ENCODE measurements at regions of chr1 and their contacts with region 1.

Region 1: DNA sequence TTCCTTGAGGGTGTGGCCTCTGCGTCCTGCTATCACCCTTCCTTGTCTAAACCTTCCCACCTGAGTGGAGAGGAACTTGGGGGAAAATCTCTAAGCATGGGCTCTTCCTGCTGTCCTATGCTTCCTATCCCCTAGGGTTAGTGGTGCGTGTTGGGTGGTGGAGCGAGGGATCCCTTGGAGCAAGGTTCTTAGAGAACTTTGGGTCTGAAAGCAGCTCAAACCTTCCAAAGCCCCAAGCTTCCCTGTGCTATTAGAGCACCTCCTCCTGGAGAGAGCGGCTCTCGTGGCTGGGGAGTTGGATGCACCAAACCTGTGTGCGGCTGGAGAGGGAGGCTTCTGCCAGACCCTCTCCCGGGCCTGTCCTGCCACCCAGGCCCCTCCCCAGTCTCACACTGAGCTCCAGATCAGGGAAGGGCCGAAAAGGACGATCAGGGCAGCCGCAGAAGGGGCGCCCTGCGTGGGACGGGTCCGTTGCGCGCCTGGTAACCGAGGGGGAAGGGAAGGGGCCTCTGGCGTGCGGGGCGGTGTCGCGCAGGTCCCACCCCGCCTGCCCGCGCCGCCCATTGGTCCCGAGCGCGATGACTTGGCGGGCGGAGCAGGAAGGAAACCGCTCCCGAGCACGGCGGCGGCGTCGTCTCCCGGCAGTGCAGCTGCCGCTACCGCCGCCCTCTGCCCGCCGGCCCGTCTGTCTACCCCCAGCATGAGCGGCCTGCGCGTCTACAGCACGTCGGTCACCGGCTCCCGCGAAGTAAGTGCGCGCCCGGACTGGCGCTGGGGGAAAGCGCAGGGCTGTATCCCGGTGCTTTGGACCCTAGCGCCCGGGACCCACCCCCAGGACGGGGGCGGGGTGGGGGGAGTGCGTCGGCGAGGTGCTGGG is at the start of gene SH3BGRL3:
- H3K4me3 ChIP-seq: peak within 1 kb of the TSS; percentile 63
- H3K27ac ChIP-seq: 0 out of 2 replicates have a peak within 1 kb of the TSS, but pooled peaks have one; percentile 7
- H3K4me1 ChIP-seq: 0 out of 2 replicates have a peak, but pooled peaks cover 3% of the 10 kb centered on the region
- CTCF ChIP-seq: peak; percentile 92

Region 2: GRCh38 chr1:25232027-25232865 is 1047.4 kb before region 1 on chr1 and contains the start of gene SYF2:
- CTCF ChIA-PET with region 1: no interaction called
- POLR2A ChIA-PET with region 1: no interaction called
- H3K4me3 ChIP-seq: peak within 1 kb of the TSS; percentile 94
- H3K27ac ChIP-seq: peak within 1 kb of the TSS; percentile 53
- H3K4me1 ChIP-seq: 0 out of 2 replicates have a peak, but pooled peaks cover 3% of the 10 kb centered on the region
- CTCF ChIP-seq: no peak

Region 3: GRCh38 chr1:25922056-25922969 is 357.4 kb before region 1 on chr1:
- CTCF ChIA-PET with region 1: no interaction called
- POLR2A ChIA-PET with region 1: no interaction called
- H3K4me3 ChIP-seq: peak overlapping the region; percentile 16
- H3K27ac ChIP-seq: peak overlapping the region; percentile 72
- H3K4me1 ChIP-seq: peaks cover 8% of the 10 kb centered on the region; the same call in 1 of the 2 replicates
- CTCF ChIP-seq: 0 out of 2 replicates have a peak, but pooled peaks have one; percentile 7

Region 4: GRCh38 chr1:26066857-26067256 is 212.8 kb before region 1 on chr1:
- CTCF ChIA-PET with region 1: no interaction called
- POLR2A ChIA-PET with region 1: no interaction called
- H3K4me3 ChIP-seq: no peak overlapping the region
- H3K27ac ChIP-seq: no peak overlapping the region
- H3K4me1 ChIP-seq: no peaks in the 10 kb centered on the region
- CTCF ChIP-seq: no peak

Region 5: GRCh38 chr1:26265405-26265804 is 14.3 kb before region 1 on chr1:
- CTCF ChIA-PET with region 1: interaction called, 42 read pairs
- POLR2A ChIA-PET with region 1: no interaction called
- H3K4me3 ChIP-seq: no peak overlapping the region
- H3K27ac ChIP-seq: no peak overlapping the region
- H3K4me1 ChIP-seq: no peaks in the 10 kb centered on the region
- CTCF ChIP-seq: no peak

Region 6: DNA sequence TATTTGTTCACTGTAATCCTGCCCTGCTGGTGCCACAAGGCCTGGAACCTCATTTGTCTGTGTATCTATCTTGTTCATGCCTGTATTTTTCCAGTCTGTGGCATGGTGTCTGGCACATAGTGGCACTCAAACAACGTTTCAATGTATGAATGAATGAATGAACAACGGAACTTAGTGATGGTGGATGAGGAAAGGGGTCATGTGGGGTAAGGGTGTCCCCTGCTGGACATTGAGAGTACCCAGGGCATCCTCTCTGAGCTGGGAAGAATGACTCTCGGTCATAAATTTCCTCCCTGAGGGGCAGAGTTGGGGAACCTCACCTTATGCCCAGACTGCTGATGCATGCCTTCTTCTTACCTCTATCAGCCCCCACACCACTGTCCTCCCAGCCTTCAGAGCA is 111.8 kb after region 1 on chr1:
- CTCF ChIA-PET with region 1: interaction called, 13 read pairs
- POLR2A ChIA-PET with region 1: no interaction called
- H3K4me3 ChIP-seq: no peak overlapping the region
- H3K27ac ChIP-seq: no peak overlapping the region
- H3K4me1 ChIP-seq: no peaks in the 10 kb centered on the region
- CTCF ChIP-seq: peak; percentile 70